Mammary epithelial cell (primary cell): ENCODE measurements at regions of chr1 and their contacts with region 1.

Region 1: DNA sequence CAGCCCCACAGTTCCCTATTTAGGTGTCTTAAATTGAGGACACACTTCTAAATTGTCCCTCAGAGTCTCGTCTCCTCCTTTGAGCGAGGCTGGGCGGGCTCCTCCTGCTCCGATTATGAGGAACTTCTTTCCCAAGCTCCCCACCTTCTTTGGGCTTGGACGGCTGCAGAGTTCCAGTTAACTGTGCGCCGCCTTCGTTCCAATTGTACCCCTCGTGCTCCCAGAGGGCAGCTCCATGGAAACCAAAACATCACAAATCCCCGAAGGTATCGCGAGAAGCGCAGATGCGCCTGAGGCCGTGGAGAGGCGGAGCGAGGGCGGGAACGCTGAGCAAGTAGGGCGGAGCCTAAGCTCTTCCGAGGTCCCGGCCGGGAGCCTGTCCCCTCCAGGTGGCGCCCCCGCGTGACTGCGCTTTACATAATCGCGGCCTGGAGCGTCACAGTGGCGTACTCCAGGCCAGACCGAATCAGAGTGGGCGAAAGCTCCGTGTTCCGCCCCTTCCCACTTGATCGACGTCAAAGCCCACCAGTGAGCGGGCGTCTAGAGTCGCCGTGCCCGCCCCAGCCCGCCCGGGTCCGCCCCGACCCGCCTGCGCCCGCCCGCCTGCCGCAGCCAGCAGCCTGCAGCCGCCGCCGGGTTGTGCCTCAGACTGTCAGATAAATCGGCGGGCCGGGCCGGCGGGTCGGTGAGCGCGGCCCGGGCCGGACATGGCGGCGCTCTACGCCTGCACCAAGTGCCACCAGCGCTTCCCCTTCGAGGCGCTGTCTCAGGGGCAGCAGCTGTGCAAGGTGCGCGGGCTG is at the start of gene FAM76A:
- DNase-seq: peak; percentile 99
- H3K4me3 ChIP-seq: peak within 1 kb of the TSS; percentile 87 to 100 (median 97)
- H3K27ac ChIP-seq: peak within 1 kb of the TSS; percentile 91
- H3K4me1 ChIP-seq: peaks cover 19% of the 10 kb centered on the region
- H3K27me3 ChIP-seq: no peaks in the 10 kb centered on the region
- CTCF ChIP-seq: peak; percentile 16 to 49
- total RNA-seq, gene FAM76A: 12.8 to 20.8 TPM

Region 2: DNA sequence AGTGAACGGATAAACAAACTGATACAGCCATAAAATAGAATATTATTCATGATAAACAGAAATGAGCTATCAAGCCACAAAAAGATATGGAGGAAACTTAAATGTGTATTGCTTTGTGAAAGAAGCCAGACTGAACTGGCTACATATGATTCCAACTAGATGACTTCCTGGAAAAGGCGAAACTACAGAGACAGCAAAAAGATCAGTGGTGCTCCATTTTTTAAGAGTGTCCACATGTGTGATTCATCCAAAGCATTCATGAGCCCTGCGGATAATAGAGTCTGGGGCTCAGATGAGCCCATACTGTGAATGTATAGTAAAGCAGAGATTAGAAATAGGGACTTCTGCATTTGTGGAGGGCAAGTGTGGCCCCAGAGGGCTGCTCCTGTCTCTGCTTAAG is 411.4 kb before region 1 on chr1:
- CTCF ChIA-PET with region 1: interaction called, 12 read pairs
- dilution Hi-C with region 1: no loop called
- in situ Hi-C with region 1: no loop called
- intact Hi-C with region 1: no loop called
- DNase-seq: no peak
- H3K4me3 ChIP-seq: no peak overlapping the region
- H3K27ac ChIP-seq: no peak overlapping the region
- H3K4me1 ChIP-seq: no peaks in the 10 kb centered on the region
- H3K27me3 ChIP-seq: no peaks in the 10 kb centered on the region
- CTCF ChIP-seq: no peak

Region 3: GRCh38 chr1:27752360-27752759 is 26.8 kb after region 1 on chr1:
- CTCF ChIA-PET with region 1: interaction called, 41 read pairs
- dilution Hi-C with region 1: no loop called
- in situ Hi-C with region 1: no loop called
- intact Hi-C with region 1: no loop called
- DNase-seq: no peak
- H3K4me3 ChIP-seq: no peak overlapping the region
- H3K27ac ChIP-seq: no peak overlapping the region
- H3K4me1 ChIP-seq: no peaks in the 10 kb centered on the region
- H3K27me3 ChIP-seq: no peaks in the 10 kb centered on the region
- CTCF ChIP-seq: no peak

Region 4: DNA sequence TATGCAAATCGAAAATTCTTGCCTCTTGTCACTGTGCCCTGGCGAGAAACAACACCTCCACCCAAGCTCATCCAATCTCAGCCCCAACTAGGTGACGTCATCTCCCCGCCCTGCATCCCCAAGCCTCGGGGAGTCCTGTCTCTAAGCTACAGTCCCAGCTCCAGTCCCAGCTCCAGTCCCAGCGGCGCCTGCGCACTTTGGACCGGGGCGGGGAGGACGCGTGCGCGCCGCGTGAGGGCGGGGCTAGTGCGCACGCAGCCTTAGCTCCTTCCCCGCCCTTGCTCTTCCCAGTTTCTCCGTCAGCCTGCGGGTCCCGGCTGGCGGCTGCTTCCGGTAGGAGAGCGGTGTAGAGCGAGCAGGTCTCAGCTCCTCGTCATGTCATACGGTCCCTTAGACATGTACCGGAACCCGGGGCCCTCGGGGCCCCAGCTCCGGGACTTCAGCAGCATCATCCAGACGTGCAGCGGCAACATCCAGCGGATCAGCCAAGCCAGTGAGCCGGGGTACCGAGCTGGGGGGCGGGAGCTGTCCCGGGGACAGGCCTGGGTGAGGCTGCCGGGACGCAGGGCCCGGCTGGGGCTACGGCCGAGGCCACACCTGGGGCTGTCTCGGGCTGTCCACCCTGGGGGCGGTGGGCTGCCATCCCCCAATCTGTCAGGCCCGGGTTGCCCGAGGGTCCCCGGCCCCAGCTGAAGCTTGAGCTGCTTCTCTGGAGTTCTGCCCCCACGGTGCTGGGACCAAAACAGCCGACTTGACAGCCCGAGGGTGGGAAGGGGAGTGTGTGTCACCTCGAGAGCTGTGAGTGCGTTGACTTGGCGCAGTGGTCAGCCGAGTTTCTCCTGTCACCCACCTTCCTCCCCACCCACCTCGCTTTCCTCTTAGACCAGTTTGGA is 47.6 kb after region 1 on chr1 and contains the start of gene STX12:
- CTCF ChIA-PET with region 1: no interaction called
- dilution Hi-C with region 1: no loop called
- in situ Hi-C with region 1: no loop called
- intact Hi-C with region 1: loop called (anchors 5 kb)
- DNase-seq: peak; percentile 100
- H3K4me3 ChIP-seq: peak within 1 kb of the TSS; percentile 79 to 98 (median 83)
- H3K27ac ChIP-seq: peak within 1 kb of the TSS; percentile 79
- H3K4me1 ChIP-seq: peaks cover 8% of the 10 kb centered on the region
- H3K27me3 ChIP-seq: no peaks in the 10 kb centered on the region
- CTCF ChIP-seq: no peak
- total RNA-seq, gene STX12: 39.1 to 59.8 TPM

Region 5: DNA sequence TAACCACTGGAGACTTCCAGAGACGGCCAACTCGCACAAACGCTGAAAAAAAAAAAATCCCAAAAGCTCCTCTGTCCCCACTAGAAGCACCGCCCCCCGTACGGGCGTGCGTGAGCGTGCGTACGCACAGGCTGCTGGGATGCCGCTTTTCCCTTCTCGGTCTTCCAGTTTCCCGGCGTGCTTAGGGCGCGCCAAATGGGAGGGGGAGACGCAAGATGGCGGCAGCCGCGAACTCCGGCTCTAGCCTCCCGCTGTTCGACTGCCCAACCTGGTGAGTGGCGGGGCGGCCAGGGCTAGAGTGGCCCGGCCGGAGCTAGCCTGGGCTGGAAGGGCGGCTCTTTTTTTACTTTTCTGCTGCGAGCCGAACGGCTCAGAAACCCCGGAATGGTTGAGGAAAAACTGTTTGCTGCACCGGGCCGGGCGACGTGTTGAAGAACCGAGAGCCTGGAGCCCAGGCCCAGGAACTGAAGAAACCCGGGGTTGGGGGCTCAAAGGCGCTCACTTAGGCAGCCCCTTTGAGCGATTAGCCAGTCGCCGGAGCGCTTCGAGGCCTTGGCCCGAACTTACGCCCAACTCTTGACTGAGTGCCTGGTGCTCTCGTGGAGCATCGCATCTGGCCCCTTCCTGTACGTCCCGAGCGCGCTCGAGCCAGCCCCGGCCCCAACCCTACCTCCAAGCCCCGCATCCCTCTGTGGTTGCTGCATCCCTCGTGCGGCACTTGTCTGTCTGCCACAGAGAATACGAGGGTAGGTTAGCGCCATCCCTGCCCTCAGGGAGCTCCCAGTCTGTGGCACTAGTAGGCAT is 105.2 kb after region 1 on chr1 and contains the start of gene PPP1R8:
- CTCF ChIA-PET with region 1: no interaction called
- dilution Hi-C with region 1: no loop called
- in situ Hi-C with region 1: no loop called
- intact Hi-C with region 1: loop called (anchors 1 kb)
- DNase-seq: peak; percentile 94
- H3K4me3 ChIP-seq: peak within 1 kb of the TSS; percentile 79 to 95 (median 88)
- H3K27ac ChIP-seq: peak within 1 kb of the TSS; percentile 85
- H3K4me1 ChIP-seq: peaks cover 14% of the 10 kb centered on the region
- H3K27me3 ChIP-seq: no peaks in the 10 kb centered on the region
- CTCF ChIP-seq: no peak
- total RNA-seq, gene PPP1R8: 37.0 to 42.5 TPM